GM23248 (cell line): ENCODE measurements at regions of chr4 and their contacts with region 1.

Region 1: DNA sequence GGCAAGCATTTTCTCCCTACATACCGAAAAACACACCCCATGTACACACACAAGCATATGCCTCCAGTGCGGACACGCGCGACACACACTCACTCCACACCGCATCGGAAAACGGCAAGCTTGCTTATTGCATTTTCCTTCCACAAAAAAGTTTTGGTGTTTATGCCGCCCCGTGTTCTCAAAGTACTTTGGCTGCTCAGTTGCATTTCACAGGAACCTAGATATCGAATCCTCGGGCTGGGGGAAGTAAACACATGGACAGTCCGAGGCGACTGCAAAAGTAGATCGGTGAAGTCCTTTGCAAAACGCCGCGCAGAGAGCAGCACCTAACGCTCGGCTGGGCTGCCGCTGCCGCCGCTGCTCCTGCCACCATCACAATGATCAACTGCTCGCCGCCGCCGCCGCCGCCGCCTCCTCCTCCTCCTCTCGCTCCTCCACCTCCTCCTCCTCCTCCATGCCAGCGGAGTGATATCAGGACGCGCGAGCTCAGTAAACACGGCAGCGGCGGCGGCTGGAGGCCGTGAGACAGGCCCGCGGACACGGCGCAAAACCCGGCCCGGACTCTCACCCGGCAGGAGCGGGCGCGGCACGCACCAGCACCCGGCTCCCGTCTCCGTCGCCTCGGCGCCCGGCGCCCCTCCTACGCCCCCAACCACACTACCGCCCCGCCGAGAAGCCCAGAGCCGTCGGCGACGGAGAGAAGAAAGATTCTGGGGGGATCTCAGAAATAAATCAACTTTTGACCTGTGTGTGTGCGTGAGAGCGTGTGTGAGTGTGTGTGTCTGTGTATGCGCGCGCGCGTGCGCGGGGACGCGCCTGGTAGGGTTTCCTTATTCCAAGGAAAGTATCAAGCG is at the start of gene MAML3:
- DNase-seq: peak; percentile 99
- H3K4me3 ChIP-seq: peak within 1 kb of the TSS; percentile 99
- H3K27ac ChIP-seq: peak within 1 kb of the TSS; percentile 90
- H3K4me1 ChIP-seq: 0 out of 2 replicates have a peak, but pooled peaks cover 6% of the 10 kb centered on the region
- H3K27me3 ChIP-seq: no peaks in the 10 kb centered on the region
- total RNA-seq, gene MAML3: 1.5 and 1.9 TPM in 2 replicates

Region 2: DNA sequence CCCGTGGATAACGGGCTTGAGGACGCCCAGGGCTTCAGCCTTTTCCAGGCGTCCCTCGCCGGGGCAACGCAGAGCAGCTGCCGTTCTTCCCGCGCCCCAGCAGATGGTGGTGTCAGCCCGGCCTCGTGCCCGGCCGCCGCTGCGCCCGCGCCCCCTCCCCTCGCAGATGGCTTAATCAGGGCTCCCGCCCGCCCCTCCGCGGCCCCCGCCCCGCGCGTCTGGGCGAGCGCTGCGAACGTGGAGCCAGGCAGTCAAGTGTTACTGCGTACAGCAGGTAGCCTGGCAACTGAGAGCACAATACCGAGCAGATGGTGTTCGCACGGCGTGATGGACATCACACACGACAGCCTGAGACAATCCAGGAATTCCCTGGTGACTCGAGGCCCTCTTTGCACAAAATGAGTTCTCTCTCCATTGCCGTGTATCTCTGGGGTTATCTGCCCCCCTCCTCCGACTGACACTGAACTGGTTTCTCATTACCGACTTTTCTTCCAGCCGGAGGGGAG is 419.0 kb before region 1 on chr4:
- in situ Hi-C with region 1: loop called (anchors 10 kb)
- DNase-seq: peak; percentile 87
- H3K4me3 ChIP-seq: peak overlapping the region; percentile 79
- H3K27ac ChIP-seq: peak overlapping the region; percentile 23; the same call in 1 of the 2 replicates
- H3K4me1 ChIP-seq: peaks cover 7% of the 10 kb centered on the region; the same call in 1 of the 2 replicates
- H3K27me3 ChIP-seq: no peaks in the 10 kb centered on the region

Region 3: GRCh38 chr4:140052050-140052449 is 101.9 kb before region 1 on chr4:
- in situ Hi-C with region 1: loop called (anchors 10 kb)
- DNase-seq: peak; percentile 73
- H3K4me3 ChIP-seq: no peak overlapping the region
- H3K27ac ChIP-seq: no peak overlapping the region
- H3K4me1 ChIP-seq: peaks cover 11% of the 10 kb centered on the region
- H3K27me3 ChIP-seq: no peaks in the 10 kb centered on the region

Region 4: GRCh38 chr4:140252742-140253555 is 99.0 kb after region 1 on chr4:
- in situ Hi-C with region 1: loop called (anchors 5 kb)
- DNase-seq: peak; percentile 76
- H3K4me3 ChIP-seq: peak overlapping the region; percentile 67
- H3K27ac ChIP-seq: peak overlapping the region; percentile 12
- H3K4me1 ChIP-seq: peaks cover 39% of the 10 kb centered on the region
- H3K27me3 ChIP-seq: no peaks in the 10 kb centered on the region

Region 5: DNA sequence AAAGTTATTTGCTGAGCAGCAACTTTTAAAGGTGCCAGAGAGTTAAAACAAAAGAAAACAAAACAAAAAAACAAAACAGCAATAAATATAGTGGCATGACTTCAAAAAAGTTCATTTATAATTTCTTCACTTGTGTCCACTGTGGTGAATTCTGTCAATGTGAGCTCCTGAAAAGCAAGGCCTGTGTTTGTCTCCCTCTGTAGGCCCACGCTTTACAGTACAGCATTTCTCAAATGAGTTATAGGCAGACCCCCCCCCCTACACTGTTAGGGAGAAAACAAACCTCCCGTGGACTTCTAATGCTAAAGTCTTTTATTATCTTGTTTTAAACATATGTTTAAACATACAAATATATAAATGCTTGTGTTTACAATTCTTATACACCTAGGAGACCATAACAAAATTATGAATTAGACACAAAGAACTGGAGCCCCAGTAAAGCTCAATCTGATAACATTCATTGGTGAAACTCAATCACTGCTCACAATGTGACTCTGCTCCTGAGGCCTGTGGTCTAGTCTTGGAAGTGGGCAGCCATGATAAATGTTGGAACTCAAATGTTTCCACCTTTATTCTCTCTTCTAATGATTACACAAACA is 172.5 kb after region 1 on chr4:
- in situ Hi-C with region 1: loop called (anchors 10 kb)
- DNase-seq: peak; percentile 73
- H3K4me3 ChIP-seq: no peak overlapping the region
- H3K27ac ChIP-seq: no peak overlapping the region
- H3K4me1 ChIP-seq: no peaks in the 10 kb centered on the region
- H3K27me3 ChIP-seq: no peaks in the 10 kb centered on the region